Activated T-helper 1 cell treated with anti-CD3 and anti-CD28 coated beads, Interleukin-12 subunit alpha, Interleukin-12 subunit beta, Interleukin-2, Interleukin-4 antibody, amounts not matched to agents 30 ng/mL and 10 ng/mL and 1 ng/mL, durations not matched to agents 14 hours and 24 hours and 36 hours (primary cell): ENCODE measurements at regions of chr14 and their contacts with region 1.

Region 1: GRCh38 chr14:22852940-22853767 is 16.8 kb downstream of the MMP14 start:
- DNase-seq: peak; percentile 80
- H3K4me3 Mint-ChIP-seq: peak overlapping the region; percentile 81
- H3K27ac Mint-ChIP-seq: peak overlapping the region; percentile 82
- H3K4me1 Mint-ChIP-seq: peaks cover 42% of the 10 kb centered on the region
- H3K27me3 Mint-ChIP-seq: peaks cover 13% of the 10 kb centered on the region

Region 2: GRCh38 chr14:21997300-21997699 is 855.9 kb before region 1 on chr14:
- intact Hi-C with region 1: loop called (anchors 10 kb)
- DNase-seq: peak; percentile 42
- H3K4me3 Mint-ChIP-seq: peak overlapping the region; percentile 92
- H3K27ac Mint-ChIP-seq: peak overlapping the region; percentile 88
- H3K4me1 Mint-ChIP-seq: peaks cover 26% of the 10 kb centered on the region
- H3K27me3 Mint-ChIP-seq: no peaks in the 10 kb centered on the region

Region 3: DNA sequence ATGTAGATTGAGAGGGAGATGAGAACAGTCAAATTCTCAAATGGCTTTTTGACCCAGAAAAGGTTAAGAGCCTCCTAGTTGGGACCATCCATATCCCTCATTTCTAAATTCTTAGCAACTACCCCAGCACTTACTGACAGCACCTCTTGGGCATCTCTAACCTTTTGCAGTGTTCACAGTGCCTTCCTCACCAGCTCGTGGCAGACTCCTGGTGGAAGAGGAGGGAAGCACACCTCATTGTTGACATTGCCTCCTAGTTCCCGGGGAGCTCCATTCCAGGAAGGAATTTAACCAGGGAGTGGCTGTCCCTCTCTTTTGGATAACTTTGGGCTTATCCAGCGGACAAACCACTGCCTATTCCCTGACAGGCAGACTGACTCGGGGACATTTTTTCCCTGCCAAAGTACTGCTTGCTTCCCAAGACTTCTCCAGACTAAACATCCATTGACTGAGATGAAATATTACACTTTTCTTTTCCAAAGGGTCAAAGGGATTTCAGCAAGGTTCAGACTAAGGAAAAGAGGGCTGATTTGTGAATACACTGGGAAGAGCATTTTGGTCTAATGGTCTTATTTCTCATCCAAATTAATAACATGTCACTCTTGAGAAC is 200.0 kb before region 1 on chr14:
- intact Hi-C with region 1: loop called (anchors 2 kb)
- DNase-seq: peak; percentile 25
- H3K4me3 Mint-ChIP-seq: no peak overlapping the region
- H3K27ac Mint-ChIP-seq: no peak overlapping the region
- H3K4me1 Mint-ChIP-seq: no peaks in the 10 kb centered on the region
- H3K27me3 Mint-ChIP-seq: no peaks in the 10 kb centered on the region

Region 4: GRCh38 chr14:22766456-22767322 is 86.5 kb before region 1 on chr14 and contains the start of gene OXA1L:
- intact Hi-C with region 1: loop called (anchors 1 kb)
- DNase-seq: peak; percentile 94
- H3K4me3 Mint-ChIP-seq: peak within 1 kb of the TSS; percentile 94
- H3K27ac Mint-ChIP-seq: peak within 1 kb of the TSS; percentile 96
- H3K4me1 Mint-ChIP-seq: peaks cover 22% of the 10 kb centered on the region
- H3K27me3 Mint-ChIP-seq: no peaks in the 10 kb centered on the region
- total RNA-seq, gene OXA1L: 125 and 127 TPM in 2 replicates

Region 5: DNA sequence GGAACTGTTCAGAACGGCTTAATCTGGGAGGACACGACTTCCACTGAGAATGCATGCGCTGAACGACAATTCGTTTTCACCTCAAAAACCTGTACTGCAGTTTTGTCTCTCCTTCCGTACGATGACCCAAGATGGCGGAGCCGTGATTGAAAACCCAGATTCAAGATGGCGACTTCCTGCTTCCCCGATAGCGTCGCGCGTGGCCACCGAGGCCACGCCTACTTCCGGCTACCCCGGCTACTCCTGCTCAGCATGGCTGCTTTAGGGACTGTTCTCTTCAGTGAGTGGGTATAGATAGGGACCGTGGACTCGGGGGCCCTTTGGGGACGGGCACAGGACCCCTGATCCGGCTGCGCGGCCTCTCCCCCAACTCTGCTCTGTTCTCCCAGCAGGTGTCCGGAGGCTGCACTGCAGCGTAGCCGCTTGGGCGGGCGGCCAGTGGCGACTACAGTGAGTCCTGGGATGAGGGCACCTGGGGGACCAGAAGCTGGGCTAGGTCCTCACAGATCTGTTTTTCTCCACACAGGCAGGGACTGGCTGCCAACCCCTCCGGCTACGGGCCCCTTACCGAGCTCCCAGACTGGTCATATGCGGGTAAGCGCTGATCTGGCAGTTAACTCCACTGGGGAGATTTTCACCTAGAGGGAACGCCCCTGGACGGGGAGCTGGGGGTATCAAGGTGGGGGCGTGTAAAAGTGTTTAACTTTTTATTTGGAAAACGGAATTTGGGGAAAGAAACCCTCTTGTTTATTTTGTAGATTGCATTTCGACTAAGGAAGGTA is 23.3 kb before region 1 on chr14 and contains the start of gene MRPL52:
- intact Hi-C with region 1: loop called (anchors 1 kb)
- DNase-seq: peak; percentile 81
- H3K4me3 Mint-ChIP-seq: peak within 1 kb of the TSS; percentile 95
- H3K27ac Mint-ChIP-seq: peak within 1 kb of the TSS; percentile 91
- H3K4me1 Mint-ChIP-seq: peaks cover 33% of the 10 kb centered on the region
- H3K27me3 Mint-ChIP-seq: no peaks in the 10 kb centered on the region
- total RNA-seq, gene MRPL52: 187 and 196 TPM in 2 replicates

Region 6: DNA sequence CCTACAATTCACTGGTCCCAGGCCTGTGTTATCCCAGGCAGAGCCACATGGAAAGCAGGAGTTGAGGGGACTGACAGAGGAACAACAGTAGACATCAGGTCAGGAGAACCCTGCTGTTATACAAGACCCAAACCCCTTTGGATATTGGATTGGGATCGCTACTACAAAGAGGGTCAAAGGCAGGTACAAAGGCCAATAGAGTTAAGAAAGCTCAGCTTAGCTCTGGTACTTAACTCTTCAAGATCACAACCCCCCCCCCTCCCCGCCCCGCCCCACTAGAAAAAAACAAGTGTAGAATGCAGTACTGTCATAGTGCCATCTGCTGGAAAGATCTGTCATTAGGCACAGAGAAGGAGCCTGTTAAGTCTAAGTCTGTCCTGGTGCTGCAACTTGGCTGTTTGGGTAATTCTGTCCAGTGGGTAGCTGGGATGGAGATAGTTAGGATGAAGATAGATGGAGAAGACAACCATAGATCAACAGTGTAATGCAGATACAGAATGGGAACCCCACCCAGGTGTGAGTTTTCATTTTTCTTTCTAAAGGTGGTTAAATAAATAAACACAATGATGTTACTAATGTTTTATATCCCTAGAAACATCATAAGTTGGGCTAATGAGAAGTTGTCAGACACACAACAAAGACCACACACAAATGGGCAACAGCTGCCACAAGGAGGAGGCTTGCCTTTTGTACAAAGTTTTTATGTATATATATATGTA is 47.1 kb after region 1 on chr14:
- intact Hi-C with region 1: loop called (anchors 1 kb)
- DNase-seq: peak; percentile 30
- H3K4me3 Mint-ChIP-seq: no peak overlapping the region
- H3K27ac Mint-ChIP-seq: peak overlapping the region; percentile 57
- H3K4me1 Mint-ChIP-seq: peaks cover 19% of the 10 kb centered on the region
- H3K27me3 Mint-ChIP-seq: no peaks in the 10 kb centered on the region